K562 (cell line): ENCODE measurements at regions of chr22 and their contacts with region 1.

Region 1: DNA sequence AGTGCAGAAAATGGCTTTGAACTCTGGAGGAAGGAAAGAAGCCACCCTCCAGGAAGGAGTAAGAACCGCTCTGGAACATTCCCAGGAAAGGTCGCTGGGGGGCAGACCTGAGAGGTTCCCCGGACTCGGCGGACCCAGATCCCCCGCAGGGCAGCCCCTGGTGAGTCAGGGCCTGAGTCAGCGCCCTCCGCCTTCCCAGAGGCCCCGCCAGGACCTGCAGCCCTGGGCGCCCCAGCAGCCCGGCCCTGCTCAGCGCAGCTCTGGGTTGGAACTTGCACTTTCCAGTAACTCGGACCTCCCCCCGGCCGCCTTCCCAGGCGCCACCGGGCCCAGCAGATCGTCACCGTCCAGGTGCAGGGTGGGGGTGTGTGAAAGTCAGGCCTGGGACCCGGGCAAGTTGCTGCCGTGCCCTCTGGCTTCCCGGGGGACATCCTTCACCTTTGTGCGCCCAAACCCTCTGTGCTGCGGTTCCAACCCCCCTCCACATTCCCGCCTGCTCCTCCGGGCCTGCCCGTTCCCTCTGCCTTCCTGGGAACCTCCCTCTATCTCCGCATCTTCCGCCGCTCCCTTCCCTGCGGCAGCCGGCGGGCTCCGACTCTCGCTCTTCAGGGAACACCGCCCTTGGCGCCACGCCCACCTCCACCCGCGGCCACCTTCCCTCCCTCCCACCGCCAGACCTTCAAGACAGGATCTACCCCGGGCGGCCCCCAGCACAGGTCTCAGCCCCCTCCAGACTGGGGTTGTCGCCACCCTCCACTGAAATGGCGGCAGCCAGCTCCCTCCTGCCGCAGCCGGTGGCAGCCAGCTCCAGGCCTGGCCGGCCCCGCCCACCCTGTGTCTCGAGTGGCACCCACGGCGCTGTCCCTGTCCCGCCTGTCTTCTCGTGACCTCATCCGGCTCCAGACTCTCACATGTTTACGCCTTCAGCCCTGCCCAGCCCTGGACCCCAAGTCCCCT is 36.8 kb upstream of the WNT7B start:
- DNase-seq: peak; percentile 89 to 92 (median 90)
- ATAC-seq: peak; percentile 99
- H3K4me3 ChIP-seq: peak overlapping the region; percentile 60
- H3K27ac ChIP-seq: peak overlapping the region; percentile 93
- H3K4me1 ChIP-seq: peaks cover 14 to 37% of the 10 kb centered on the region in 2 experiments; a peak in 4 of 5 replicates
- H3K27me3 ChIP-seq: no peaks in the 10 kb centered on the region
- CTCF ChIP-seq: peak; percentile 80 to 85 (median 83)
- EP300 ChIP-seq: 0 out of 2 replicates have a peak, but pooled peaks have one; percentile 8
- POLR2A ChIP-seq: peak; percentile 76
- RAD21 ChIP-seq: peak; percentile 39 to 65

Region 2: GRCh38 chr22:46035742-46036557 is 22.2 kb after region 1 on chr22:
- CTCF ChIA-PET with region 1: interaction called, 3 read pairs
- POLR2A ChIA-PET with region 1: interaction called, 5 read pairs
- in situ Hi-C with region 1: no loop called
- intact Hi-C with region 1: loop called (anchors 1 kb)
- DNase-seq: peak; percentile 95 to 98 (median 97)
- ATAC-seq: peak; percentile 95
- H3K4me3 ChIP-seq: peak overlapping the region; percentile 72
- H3K27ac ChIP-seq: peak overlapping the region; percentile 71
- H3K4me1 ChIP-seq: peaks cover 9 to 24% of the 10 kb centered on the region in 2 experiments; a peak in 4 of 5 replicates
- H3K27me3 ChIP-seq: no peaks in the 10 kb centered on the region
- CTCF ChIP-seq: no peak
- EP300 ChIP-seq: no peak
- POLR2A ChIP-seq: peak; percentile 85
- RAD21 ChIP-seq: no peak

Region 3: GRCh38 chr22:46303347-46303965 is 289.7 kb after region 1 on chr22:
- CTCF ChIA-PET with region 1: no interaction called
- POLR2A ChIA-PET with region 1: no interaction called
- in situ Hi-C with region 1: loop called (anchors 25 kb)
- intact Hi-C with region 1: no loop called
- DNase-seq: no peak
- ATAC-seq: no peak
- H3K4me3 ChIP-seq: no peak overlapping the region
- H3K27ac ChIP-seq: no peak overlapping the region
- H3K4me1 ChIP-seq: peaks cover 6 to 7% of the 10 kb centered on the region in 2 experiments; a peak in 3 of 5 replicates
- H3K27me3 ChIP-seq: no peaks in the 10 kb centered on the region
- CTCF ChIP-seq: no peak
- EP300 ChIP-seq: no peak
- POLR2A ChIP-seq: no peak
- RAD21 ChIP-seq: no peak